Activated CD4-positive, alpha-beta T cell treated with anti-CD3 and anti-CD28 coated beads for 36 hours (primary cell): ENCODE measurements at regions of chr12 and their contacts with region 1.

Region 1: DNA sequence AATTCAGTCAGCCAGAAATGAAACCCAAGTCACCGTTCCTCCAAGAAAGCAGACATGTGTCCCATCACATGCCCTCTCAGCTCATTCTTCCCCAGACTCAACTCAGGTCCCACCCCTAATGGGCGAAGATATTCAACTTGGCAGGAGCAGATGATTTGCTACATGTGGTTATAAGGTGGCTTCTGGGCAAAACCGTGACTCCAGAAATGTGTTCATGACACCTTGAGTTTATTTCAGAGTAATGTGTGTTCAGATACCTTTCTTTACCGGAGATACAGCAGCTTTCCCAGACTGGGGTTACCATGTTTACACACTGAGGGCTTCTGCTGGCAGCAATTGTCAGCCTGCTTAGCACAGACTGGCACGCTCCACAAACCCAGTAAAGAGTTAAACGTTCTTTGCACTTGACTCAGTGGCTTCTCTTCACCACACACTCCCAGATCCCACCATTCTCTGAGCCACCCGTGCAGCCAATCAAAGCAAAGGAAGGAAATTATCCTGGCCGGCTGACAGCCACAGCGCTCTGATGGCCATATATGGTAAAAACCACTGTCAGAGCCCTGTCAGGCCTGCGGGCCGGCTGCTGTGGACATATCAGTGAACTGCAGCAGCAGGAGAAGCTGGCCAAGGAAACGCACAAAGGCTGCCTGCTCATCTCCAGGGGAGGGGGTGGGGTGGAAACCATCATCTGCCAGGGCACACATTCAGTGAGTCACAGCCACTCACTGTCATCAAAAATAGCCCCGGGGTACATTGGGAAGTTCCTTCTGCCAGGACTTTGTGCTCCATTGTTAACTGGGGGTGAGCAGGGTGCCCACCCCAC is 39.9 kb downstream of the CORO1C start:
- DNase-seq: peak; percentile 92
- ATAC-seq: peak; percentile 63
- H3K4me3 Mint-ChIP-seq: peak overlapping the region; percentile 67
- H3K27ac Mint-ChIP-seq: peak overlapping the region; percentile 96
- H3K4me1 Mint-ChIP-seq: peaks cover 80% of the 10 kb centered on the region
- H3K27me3 Mint-ChIP-seq: no peaks in the 10 kb centered on the region

Region 2: GRCh38 chr12:108511633-108512540 is 179.5 kb before region 1 on chr12:
- CTCF ChIA-PET with region 1: no interaction called
- POLR2A ChIA-PET with region 1: no interaction called
- intact Hi-C with region 1: no loop called
- DNase-seq: peak; percentile 88
- ATAC-seq: no peak
- H3K4me3 Mint-ChIP-seq: no peak overlapping the region
- H3K27ac Mint-ChIP-seq: no peak overlapping the region
- H3K4me1 Mint-ChIP-seq: peaks cover 30% of the 10 kb centered on the region
- H3K27me3 Mint-ChIP-seq: no peaks in the 10 kb centered on the region

Region 3: GRCh38 chr12:108618079-108618952 is 73.1 kb before region 1 on chr12:
- CTCF ChIA-PET with region 1: interaction called, 22 read pairs
- POLR2A ChIA-PET with region 1: no interaction called
- intact Hi-C with region 1: loop called in 1 of 2 experiments (anchors 1 kb)
- DNase-seq: peak; percentile 88
- ATAC-seq: peak; percentile 46
- H3K4me3 Mint-ChIP-seq: no peak overlapping the region
- H3K27ac Mint-ChIP-seq: peak overlapping the region; percentile 62
- H3K4me1 Mint-ChIP-seq: peaks cover 40% of the 10 kb centered on the region
- H3K27me3 Mint-ChIP-seq: no peaks in the 10 kb centered on the region

Region 4: GRCh38 chr12:108649669-108650068 is 41.7 kb before region 1 on chr12:
- CTCF ChIA-PET with region 1: no interaction called
- POLR2A ChIA-PET with region 1: interaction called, 3 read pairs
- intact Hi-C with region 1: loop called in 1 of 2 experiments (anchors 5 kb)
- DNase-seq: no peak
- ATAC-seq: no peak
- H3K4me3 Mint-ChIP-seq: no peak overlapping the region
- H3K27ac Mint-ChIP-seq: peak overlapping the region; percentile 35
- H3K4me1 Mint-ChIP-seq: peaks cover 41% of the 10 kb centered on the region
- H3K27me3 Mint-ChIP-seq: no peaks in the 10 kb centered on the region

Region 5: DNA sequence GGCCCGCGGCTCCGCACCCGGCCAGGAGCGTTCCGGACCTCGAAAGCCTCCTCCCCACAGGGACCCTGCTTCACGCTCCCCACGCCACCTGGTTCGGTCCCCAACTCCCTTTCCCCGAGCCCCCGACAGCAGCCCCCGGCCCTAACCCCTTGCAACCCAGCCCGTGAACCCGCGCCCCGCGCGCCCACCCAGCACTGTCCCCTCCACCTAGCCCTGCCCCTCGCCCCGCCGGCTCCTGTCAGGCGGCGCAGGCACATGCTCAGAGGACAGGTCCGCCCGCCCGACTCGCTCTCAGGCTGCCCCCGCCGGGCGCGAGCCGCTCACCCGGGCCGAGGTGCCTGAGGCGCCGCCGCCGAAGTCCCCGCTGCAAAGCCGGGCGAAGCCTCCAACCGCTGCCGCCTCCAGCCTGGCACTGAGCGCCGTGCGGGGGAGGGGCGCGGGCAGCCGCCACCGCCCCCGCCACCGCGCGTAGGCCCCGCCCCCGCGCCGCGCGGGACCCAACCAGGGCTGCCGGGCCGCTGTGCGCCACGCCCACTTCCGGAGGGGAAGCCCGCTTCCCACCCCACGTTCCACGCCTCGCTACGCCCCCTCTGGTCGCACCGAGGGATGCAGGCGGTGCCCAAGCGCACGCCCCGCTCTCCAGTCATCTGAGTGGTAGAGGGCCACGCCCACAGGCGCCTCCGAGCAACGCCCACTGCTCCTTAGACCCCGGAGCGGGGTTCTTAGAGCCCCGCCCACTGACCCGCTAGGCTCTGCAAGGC is 39.9 kb after region 1 on chr12 and contains the start of gene CORO1C:
- CTCF ChIA-PET with region 1: interaction called, 6 read pairs
- POLR2A ChIA-PET with region 1: interaction called, 4 read pairs
- intact Hi-C with region 1: loop called (anchors 1 kb)
- DNase-seq: peak; percentile 98
- ATAC-seq: peak; percentile 78
- H3K4me3 Mint-ChIP-seq: peak within 1 kb of the TSS; percentile 88
- H3K27ac Mint-ChIP-seq: peak within 1 kb of the TSS; percentile 93
- H3K4me1 Mint-ChIP-seq: peaks cover 36% of the 10 kb centered on the region
- H3K27me3 Mint-ChIP-seq: no peaks in the 10 kb centered on the region
- total RNA-seq, gene CORO1C: 83.5 to 90.8 TPM

Region 6: GRCh38 chr12:109052414-109053323 is 361.3 kb after region 1 on chr12 and contains the start of gene USP30:
- CTCF ChIA-PET with region 1: no interaction called
- POLR2A ChIA-PET with region 1: interaction called, 3 read pairs
- intact Hi-C with region 1: loop called in 1 of 2 experiments (anchors 2 kb)
- DNase-seq: peak; percentile 91
- ATAC-seq: peak; percentile 70
- H3K4me3 Mint-ChIP-seq: peak within 1 kb of the TSS; percentile 86
- H3K27ac Mint-ChIP-seq: peak within 1 kb of the TSS; percentile 97
- H3K4me1 Mint-ChIP-seq: peaks cover 6% of the 10 kb centered on the region
- H3K27me3 Mint-ChIP-seq: no peaks in the 10 kb centered on the region
- total RNA-seq, gene USP30: 9.2 to 14.5 TPM